ENCODE measurements at regions of chr12 and their contacts with region 1.

Region 1: DNA sequence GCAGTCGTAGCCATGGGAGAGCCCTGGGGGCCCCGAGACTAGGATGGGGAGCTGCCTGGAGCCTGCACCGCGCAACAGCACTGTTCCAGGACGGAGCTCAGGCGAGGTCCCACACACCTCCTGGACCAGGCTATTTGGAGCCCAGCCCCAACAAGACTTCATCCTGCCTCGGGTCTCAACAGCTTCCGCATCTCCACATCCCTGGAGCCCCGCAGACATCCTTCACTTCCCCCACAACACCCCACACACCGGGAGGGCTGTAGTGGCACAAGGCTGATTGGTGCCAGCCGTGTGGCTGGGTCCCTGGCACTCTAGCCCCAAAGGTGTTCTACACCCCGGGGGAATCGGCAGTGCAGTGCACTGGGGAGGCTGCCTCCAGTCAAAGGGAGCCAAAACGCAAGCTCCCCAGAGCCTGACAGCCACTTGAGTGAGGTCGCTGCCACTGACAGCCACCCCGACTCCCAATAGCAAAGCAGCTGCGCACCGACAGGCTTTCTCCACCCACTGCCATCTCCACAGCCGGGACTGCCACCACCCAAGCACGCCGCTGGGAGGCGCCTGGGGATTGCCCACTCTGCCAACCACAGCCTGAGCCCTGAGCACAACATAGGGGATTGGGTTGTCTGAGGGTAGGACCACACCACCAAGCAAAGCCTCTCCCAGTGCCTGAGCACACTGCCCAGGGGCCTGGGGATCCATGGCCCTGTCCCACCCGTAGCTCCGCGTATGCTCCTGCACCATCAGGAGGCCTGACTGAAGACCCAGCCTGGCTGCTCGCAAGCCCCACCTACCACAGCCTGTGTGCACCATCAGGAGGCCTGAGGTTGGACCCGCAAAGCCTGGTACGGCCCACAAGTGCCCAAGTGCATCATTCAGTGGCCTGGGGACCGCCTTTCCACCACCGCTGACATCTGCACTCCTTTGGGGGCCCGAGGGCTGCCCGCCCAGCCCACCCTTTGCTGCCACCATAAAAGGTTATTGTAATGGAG is 13.2 kb upstream of the KLRF1 start:
- DNase-seq: peak; percentile 70 to 98
- H3K4me3 ChIP-seq: peak overlapping the region in 3 of 4 experiments; percentile 22 to 50 (median 34); a peak in 3 of 8 replicates
- H3K27ac ChIP-seq: no peak overlapping the region
- H3K4me1 ChIP-seq: no peaks in the 10 kb centered on the region
- H3K27me3 ChIP-seq: no peaks in the 10 kb centered on the region
- CTCF ChIP-seq: peak; percentile 94 to 98 (median 95)
- EP300 ChIP-seq: no peak
- POLR2A ChIP-seq: no peak
- RAD21 ChIP-seq: peak; percentile 97

Region 2: DNA sequence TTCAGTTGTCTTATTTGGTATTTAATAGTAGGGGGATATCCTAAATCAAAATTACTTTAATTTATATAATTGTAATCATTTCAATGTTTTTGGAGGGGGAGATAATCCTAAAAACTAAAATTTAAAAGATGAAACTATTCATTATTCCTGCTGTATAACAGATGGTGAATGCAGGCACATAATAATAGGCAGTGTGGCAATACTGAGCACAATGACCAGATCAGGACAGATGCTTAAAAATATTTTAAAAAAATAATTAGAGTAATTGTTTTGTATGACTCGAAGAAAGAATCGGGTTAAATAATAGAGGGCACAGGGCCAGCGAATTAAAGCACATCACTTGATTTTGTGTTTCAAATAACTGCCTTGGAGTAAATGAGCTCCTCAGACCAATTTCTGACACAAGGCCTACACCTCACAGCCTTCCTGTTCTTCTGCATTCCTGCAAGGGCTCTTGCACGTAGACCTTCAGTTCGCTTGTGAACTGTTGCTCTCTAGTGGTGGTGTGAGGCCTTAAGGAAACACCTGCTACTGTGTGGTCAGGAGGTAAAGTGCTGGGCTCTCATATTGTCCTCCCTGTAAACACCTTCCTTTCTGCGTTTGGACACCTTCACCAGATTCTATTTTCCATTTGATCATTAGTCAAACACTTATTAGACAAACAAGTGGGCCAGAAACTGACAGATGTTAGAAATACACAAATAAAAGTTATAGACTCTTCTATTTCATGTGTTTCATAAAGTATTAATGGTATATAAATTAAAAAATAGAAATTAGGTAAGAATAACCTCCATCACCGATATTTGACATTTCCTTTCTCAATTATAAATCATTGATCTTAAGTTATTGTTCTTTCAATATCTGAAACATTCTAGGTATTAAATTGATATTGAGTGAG is 16.1 kb before region 1 on chr12:
- CTCF ChIA-PET with region 1: interaction called, 54 read pairs
- POLR2A ChIA-PET with region 1: no interaction called
- DNase-seq: peak in 1 of 2 experiments; percentile 43
- H3K4me3 ChIP-seq: no peak overlapping the region
- H3K27ac ChIP-seq: no peak overlapping the region
- H3K4me1 ChIP-seq: no peaks in the 10 kb centered on the region; a peak in 1 of 7 replicates
- H3K27me3 ChIP-seq: no peaks in the 10 kb centered on the region
- CTCF ChIP-seq: peak; percentile 53 to 95 (median 94)
- EP300 ChIP-seq: peak in 1 of 2 experiments; percentile 67; a peak in 1 of 3 replicates
- POLR2A ChIP-seq: no peak
- RAD21 ChIP-seq: peak; percentile 98 to 99

Region 3: DNA sequence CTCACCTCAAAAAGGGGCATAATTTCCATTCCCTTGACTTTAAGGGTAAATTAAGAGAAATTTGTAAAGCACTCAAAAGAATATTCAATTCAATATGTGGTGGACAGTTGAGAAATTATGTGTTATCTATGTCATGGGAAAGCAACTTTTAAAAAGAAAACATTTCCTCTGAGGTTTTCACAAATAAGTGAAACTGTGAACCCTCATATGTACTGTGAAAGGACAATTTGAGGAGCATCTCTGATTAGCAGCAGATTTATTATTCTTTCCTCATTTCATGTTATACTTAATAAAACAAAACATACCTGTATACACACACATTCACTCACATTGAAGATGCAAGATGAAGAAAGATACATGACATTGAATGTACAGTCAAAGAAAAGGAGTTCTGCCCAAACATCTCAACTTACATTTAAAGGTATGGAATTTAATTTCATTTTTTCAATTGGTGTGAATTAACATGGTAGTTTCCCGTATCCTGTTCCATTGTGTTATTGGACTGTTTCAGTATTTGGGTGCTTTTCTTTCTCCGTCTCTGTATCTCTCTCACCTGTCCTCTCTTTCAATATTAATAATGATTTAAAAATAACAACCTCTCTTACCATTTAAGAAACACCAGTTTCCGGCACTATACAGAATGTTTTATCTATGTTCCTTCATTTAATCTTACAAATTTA is 13.2 kb after region 1 on chr12 and contains the start of gene KLRF1:
- CTCF ChIA-PET with region 1: interaction called, 16 read pairs
- POLR2A ChIA-PET with region 1: no interaction called
- DNase-seq: no peak
- H3K4me3 ChIP-seq: no peak within 1 kb of the TSS
- H3K27ac ChIP-seq: no peak within 1 kb of the TSS
- H3K4me1 ChIP-seq: no peaks in the 10 kb centered on the region
- H3K27me3 ChIP-seq: no peaks in the 10 kb centered on the region
- CTCF ChIP-seq: no peak
- EP300 ChIP-seq: no peak
- POLR2A ChIP-seq: no peak
- RAD21 ChIP-seq: no peak
- total RNA-seq, gene KLRF1: not detected in 2 replicates

Region 4: DNA sequence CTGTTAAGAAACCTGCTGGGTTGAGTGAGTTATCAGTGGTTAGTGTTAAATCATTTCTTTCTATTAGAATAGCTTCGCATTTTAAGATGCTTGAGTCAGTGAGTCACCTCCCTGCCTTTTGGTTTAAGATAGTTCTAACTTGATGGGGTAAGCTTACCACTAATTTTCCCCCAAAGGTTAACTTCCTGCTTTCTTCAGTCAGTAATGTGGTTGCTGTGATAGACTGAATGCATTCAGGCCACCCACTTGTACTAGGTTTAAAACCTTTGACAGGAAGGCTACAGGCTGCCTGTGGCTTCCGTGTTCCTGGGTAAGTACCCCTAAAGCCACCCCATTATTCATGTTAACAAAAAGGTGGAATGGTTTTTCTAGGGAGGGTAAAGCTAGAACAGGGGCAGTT is 92.8 kb after region 1 on chr12:
- CTCF ChIA-PET with region 1: interaction called, 13 read pairs
- POLR2A ChIA-PET with region 1: interaction called, 5 read pairs
- DNase-seq: no peak
- H3K4me3 ChIP-seq: peak overlapping the region in 1 of 4 experiments; percentile 71; a peak in 3 of 8 replicates
- H3K27ac ChIP-seq: no peak overlapping the region
- H3K4me1 ChIP-seq: peaks cover 0 to 9% (median 6%) of the 10 kb centered on the region in 4 experiments; a peak in 3 of 7 replicates
- H3K27me3 ChIP-seq: no peaks in the 10 kb centered on the region
- CTCF ChIP-seq: no peak
- EP300 ChIP-seq: no peak
- POLR2A ChIP-seq: peak in 1 of 2 experiments; percentile 37; a peak in 2 of 3 replicates
- RAD21 ChIP-seq: no peak

Region 5: GRCh38 chr12:9925708-9926393 is 111.7 kb after region 1 on chr12:
- CTCF ChIA-PET with region 1: interaction called, 10 read pairs
- POLR2A ChIA-PET with region 1: no interaction called
- DNase-seq: peak in 1 of 2 experiments; percentile 33
- H3K4me3 ChIP-seq: no peak overlapping the region
- H3K27ac ChIP-seq: no peak overlapping the region
- H3K4me1 ChIP-seq: no peaks in the 10 kb centered on the region
- H3K27me3 ChIP-seq: no peaks in the 10 kb centered on the region
- CTCF ChIP-seq: peak in 2 of 3 experiments; percentile 47 to 51; a peak in 3 of 4 replicates
- EP300 ChIP-seq: no peak
- POLR2A ChIP-seq: no peak
- RAD21 ChIP-seq: peak; percentile 69 to 74

Region 6: GRCh38 chr12:9971181-9971580 is 157.1 kb after region 1 on chr12 and contains the start of gene CLEC12A:
- CTCF ChIA-PET with region 1: no interaction called
- POLR2A ChIA-PET with region 1: no interaction called
- DNase-seq: no peak
- H3K4me3 ChIP-seq: no peak within 1 kb of the TSS
- H3K27ac ChIP-seq: no peak within 1 kb of the TSS
- H3K4me1 ChIP-seq: no peaks in the 10 kb centered on the region
- H3K27me3 ChIP-seq: no peaks in the 10 kb centered on the region
- CTCF ChIP-seq: no peak
- EP300 ChIP-seq: no peak
- POLR2A ChIP-seq: no peak
- RAD21 ChIP-seq: no peak
- total RNA-seq, gene CLEC12A: not detected in 2 replicates

Region 7: DNA sequence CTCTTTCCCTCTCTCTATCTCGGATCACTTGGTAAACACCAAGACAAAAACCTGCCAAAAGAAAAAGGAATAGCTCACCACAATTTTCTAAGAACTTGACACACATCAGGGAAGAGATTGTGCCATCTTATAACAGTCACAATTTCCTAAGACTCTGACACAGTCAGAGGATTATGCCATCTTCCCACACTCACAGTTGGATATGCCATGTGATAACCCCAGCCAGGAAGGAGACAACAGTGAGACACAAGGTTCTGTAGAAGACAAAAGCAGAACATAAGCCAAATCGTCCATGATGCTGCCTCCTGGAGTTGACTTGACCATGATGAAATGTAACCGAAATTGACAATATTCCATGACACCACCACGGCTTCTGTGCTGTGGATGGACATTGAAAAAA is 213.6 kb after region 1 on chr12:
- CTCF ChIA-PET with region 1: no interaction called
- POLR2A ChIA-PET with region 1: no interaction called
- DNase-seq: no peak
- H3K4me3 ChIP-seq: no peak overlapping the region
- H3K27ac ChIP-seq: no peak overlapping the region
- H3K4me1 ChIP-seq: peaks cover 0 to 7% (median 0%) of the 10 kb centered on the region in 4 experiments; a peak in 1 of 7 replicates
- H3K27me3 ChIP-seq: no peaks in the 10 kb centered on the region
- CTCF ChIP-seq: no peak
- EP300 ChIP-seq: no peak
- POLR2A ChIP-seq: no peak
- RAD21 ChIP-seq: no peak

Measured in H1 (cell line).